ENCODE measurements at regions of chr2 and their contacts with region 1.

Region 1: DNA sequence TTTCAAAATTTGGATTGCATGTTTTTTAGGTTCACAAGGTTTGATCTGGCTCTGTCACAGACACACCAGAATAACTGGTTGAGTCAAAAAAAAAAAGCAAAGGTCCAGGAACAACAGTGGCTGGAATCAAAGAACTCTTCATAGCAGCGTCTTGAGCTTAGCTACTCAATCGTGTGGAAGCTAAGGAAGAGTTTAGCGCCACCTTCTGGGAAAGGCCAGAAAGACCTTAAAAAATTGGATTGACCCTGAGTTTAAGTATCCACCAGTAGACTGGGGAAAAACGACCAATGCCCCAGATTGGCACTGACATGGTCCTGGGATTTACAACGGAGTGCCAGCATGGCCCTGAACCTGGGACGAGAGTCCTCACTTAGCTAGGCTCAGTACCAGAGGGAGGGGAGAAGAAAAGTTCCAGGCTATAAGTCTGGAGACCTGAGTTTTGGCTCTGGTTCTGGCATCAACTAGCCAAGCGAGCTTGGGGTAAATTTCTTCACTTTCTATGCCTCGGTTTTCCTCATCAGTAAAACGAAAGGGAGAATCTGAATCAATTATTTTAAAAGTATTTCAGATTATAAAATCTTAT is 71.1 kb upstream of the TFCP2L1 start:
- DNase-seq: peak in 1 of 3 donors; percentile 82
- ATAC-seq: peak; percentile 81
- H3K4me3 ChIP-seq: no peak overlapping the region
- H3K4me1 ChIP-seq: peaks cover 9% of the 10 kb centered on the region
- CTCF ChIP-seq: peak; percentile 33

Region 2: GRCh38 chr2:121095257-121096080 is 260.7 kb before region 1 on chr2:
- intact Hi-C with region 1: loop called in 1 of 2 experiments (anchors 10 kb)
- DNase-seq: peak; percentile 66 to 85 (median 84)
- ATAC-seq: peak; percentile 88
- H3K4me3 ChIP-seq: no peak overlapping the region
- H3K4me1 ChIP-seq: no peaks in the 10 kb centered on the region
- CTCF ChIP-seq: peak; percentile 38

Region 3: GRCh38 chr2:121309801-121310200 is 46.3 kb before region 1 on chr2:
- intact Hi-C with region 1: no loop called
- DNase-seq: no peak
- ATAC-seq: peak; percentile 84
- H3K4me3 ChIP-seq: no peak overlapping the region
- H3K4me1 ChIP-seq: no peaks in the 10 kb centered on the region
- CTCF ChIP-seq: no peak